ENCODE measurements at regions of chr1 and their contacts with region 1.

Region 1: GRCh38 chr1:44985747-44986359 is 542 bp downstream of the EIF2B3 start:
- DNase-seq: peak; percentile 8
- H3K4me3 Mint-ChIP-seq: peak overlapping the region; percentile 90
- H3K27ac Mint-ChIP-seq: peak overlapping the region; percentile 40
- H3K4me1 Mint-ChIP-seq: peaks cover 5% of the 10 kb centered on the region
- H3K27me3 Mint-ChIP-seq: no peaks in the 10 kb centered on the region
- CTCF ChIP-seq: no peak

Region 2: DNA sequence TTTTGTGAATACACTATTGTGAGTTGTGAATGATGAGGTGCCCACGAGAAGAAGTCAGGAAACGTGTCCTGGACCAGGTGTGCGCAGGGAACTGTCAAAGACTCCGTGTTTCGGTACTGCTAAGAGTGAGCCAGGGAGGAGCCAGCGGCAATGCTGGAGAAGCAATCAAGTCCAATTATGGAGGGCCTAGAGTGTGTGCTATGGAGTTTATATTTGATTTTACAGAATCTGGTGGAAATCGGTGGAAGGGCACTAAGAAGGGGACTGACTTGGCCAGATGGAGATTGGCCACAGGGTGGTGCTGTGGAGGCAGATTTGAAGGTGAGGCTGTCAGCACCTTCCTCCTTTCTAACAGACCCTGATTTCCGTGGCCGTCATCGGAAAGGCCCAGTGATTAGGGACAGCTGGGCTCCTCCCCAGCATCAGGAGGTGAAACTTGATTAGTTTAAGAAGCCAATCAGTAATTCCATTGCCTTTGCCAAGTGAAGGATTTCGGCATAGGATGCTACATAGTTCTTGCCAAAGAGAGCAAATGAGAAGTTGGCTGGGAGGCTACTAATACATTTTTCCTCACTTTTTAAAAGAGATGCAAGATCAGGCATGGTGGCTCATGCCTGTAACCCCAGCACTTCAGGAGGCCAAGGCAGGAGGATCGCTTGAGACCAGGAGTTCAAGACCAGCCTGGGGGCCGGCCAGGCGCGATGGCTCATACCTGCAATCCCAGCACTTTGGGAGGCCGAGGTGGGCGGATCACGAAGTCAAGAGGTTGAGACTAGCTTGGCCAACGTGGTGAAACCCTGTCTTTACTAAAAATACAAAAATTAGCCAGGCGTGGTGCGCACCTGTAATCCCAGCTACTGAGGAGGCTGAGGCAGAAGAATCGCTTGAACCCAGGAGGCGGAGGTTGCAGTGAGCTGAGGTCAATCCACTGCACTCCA is 149.8 kb before region 1 on chr1:
- CTCF ChIA-PET with region 1: interaction called, 3 read pairs
- POLR2A ChIA-PET with region 1: interaction called, 3 read pairs
- intact Hi-C with region 1: loop called (anchors 1 kb)
- DNase-seq: peak; percentile 78
- H3K4me3 Mint-ChIP-seq: no peak overlapping the region
- H3K27ac Mint-ChIP-seq: peak overlapping the region; percentile 13
- H3K4me1 Mint-ChIP-seq: no peaks in the 10 kb centered on the region
- H3K27me3 Mint-ChIP-seq: no peaks in the 10 kb centered on the region
- CTCF ChIP-seq: peak; percentile 81

Region 3: DNA sequence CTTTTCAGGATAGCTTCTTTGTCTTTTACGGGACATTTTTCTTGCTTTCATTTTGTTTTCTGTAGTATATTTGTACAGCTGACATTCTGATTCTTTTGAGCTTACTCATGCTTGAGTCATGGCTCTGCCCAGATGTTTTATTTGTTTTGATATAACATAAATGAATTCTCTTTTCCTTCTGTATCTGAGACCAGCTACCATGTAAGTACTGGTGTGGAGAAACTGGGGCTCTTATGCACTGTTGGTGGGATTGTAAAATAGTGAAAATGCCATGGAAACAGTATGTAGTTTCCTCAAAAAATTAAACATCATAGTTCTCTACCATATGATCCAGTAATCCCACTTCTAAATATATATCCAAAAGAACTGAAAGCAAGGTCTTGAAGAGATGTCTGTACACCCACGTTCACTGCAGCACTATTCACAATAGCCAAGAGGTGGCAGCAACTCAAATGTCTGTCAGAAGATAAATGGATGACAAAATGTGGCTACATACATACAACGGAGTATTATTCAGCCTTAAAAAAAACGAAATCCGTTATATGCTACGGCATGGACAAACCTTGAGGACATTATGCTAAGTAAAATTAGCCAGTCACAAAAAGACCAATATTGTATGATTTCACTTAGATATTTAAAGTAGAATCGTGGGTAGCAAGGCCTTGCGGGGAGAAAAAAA is 60.9 kb before region 1 on chr1:
- CTCF ChIA-PET with region 1: no interaction called
- POLR2A ChIA-PET with region 1: interaction called, 11 read pairs
- intact Hi-C with region 1: no loop called
- DNase-seq: peak; percentile 70
- H3K4me3 Mint-ChIP-seq: peak overlapping the region; percentile 73
- H3K27ac Mint-ChIP-seq: peak overlapping the region; percentile 91
- H3K4me1 Mint-ChIP-seq: peaks cover 13% of the 10 kb centered on the region
- H3K27me3 Mint-ChIP-seq: no peaks in the 10 kb centered on the region
- CTCF ChIP-seq: peak; percentile 27

Region 4: GRCh38 chr1:44932151-44932550 is 53.7 kb before region 1 on chr1:
- CTCF ChIA-PET with region 1: no interaction called
- POLR2A ChIA-PET with region 1: interaction called, 11 read pairs
- intact Hi-C with region 1: no loop called
- DNase-seq: no peak
- H3K4me3 Mint-ChIP-seq: no peak overlapping the region
- H3K27ac Mint-ChIP-seq: no peak overlapping the region
- H3K4me1 Mint-ChIP-seq: peaks cover 9% of the 10 kb centered on the region
- H3K27me3 Mint-ChIP-seq: no peaks in the 10 kb centered on the region
- CTCF ChIP-seq: no peak

Region 5: DNA sequence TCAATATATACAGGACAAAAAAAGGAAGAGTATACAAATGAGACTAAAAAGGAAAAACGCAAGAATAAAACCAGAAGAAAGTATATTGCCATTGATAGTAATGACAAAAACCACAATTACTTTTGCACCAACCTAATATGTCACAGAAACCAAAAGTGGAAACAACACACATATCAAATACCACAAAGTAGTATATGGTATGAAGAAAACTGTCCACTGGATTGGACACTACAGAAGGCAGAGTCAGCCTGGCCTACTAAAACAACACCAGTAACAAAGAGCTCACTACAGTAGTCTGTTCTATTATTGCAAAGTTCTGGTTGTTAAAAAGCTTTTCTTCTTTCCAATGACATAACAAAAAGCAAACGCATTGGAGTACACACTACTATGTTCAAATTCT is 487.4 kb after region 1 on chr1:
- CTCF ChIA-PET with region 1: no interaction called
- POLR2A ChIA-PET with region 1: no interaction called
- intact Hi-C with region 1: no loop called
- DNase-seq: no peak
- H3K4me3 Mint-ChIP-seq: no peak overlapping the region
- H3K27ac Mint-ChIP-seq: no peak overlapping the region
- H3K4me1 Mint-ChIP-seq: no peaks in the 10 kb centered on the region
- H3K27me3 Mint-ChIP-seq: no peaks in the 10 kb centered on the region
- CTCF ChIP-seq: no peak

Measured in MCF 10A (cell line).